ENCODE measurements at regions of chr3 and their contacts with region 1.

Region 1: DNA sequence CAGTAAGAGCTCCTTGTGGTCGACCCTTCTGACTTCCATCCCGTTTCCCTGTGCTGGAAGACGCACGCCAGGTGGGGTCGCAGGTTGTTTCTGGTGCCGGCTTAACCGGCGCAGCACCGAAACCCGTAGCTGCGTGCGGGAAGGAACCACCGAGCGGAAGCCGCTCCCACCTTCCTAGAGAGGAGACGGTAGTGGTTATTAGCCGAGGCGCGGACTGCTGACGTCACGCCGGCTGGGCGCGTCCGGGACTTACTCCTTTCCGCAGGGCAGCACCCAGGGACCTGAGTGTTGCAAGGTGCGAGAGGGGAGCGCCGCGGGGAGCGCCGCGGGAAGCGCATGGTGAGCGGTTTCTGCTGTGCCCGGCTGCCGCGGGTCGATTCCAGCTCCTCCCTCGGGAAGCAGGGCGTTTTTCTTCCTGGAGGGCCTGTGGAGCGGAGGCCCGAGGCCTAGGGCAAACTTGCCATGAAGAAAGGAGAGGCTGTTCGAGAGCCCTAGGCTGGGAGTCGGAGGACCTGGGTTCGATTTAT is at the start of gene ZNF501:
- DNase-seq: peak; percentile 91
- H3K4me3 ChIP-seq: peak within 1 kb of the TSS; percentile 65 to 69
- H3K27ac ChIP-seq: peak within 1 kb of the TSS in 1 of 2 experiments; percentile 64; a peak in 1 of 4 replicates
- H3K4me1 ChIP-seq: no peaks in the 10 kb centered on the region; a peak in 1 of 4 replicates
- H3K27me3 ChIP-seq: no peaks in the 10 kb centered on the region
- CTCF ChIP-seq: no peak
- EP300 ChIP-seq: no peak
- RAD21 ChIP-seq: no peak
- polyA plus RNA-seq, gene ZNF501: 1.1 and 1.5 TPM in 2 replicates

Region 2: DNA sequence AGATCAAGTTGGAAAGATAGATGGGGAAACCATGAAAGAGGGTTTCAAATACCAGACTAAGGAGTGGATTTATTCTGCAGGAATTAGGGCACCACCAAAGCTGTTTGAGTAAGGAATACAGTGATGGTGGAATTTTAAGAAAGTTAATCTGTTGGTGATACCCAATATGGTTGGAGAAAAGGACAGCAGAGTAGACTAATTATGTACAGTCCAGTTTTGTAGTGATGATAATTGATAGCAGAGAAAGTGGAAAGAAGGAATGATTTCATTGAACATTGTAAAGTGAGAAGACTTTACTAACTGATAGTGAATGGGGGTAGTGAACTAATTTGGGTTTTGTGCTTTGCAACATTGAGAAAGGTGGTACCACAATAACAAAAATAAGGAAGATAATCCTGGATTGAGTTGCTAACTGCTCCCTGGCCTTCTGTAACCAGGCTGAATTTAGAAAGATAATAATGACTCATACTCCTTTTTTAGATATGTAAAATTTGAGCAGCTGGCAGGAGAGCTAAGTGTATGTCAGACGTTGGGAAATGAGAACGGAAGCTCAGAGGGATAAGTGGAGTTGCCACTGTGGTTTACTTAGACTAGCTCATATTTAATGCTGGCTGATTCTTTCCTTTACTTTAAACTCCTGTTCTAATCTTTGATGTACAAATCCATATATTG is 373.9 kb before region 1 on chr3:
- CTCF ChIA-PET with region 1: no interaction called
- POLR2A ChIA-PET with region 1: no interaction called
- DNase-seq: no peak
- H3K4me3 ChIP-seq: no peak overlapping the region
- H3K27ac ChIP-seq: peak overlapping the region; percentile 24 to 39; a peak in 3 of 4 replicates
- H3K4me1 ChIP-seq: peaks cover 0 to 5% of the 10 kb centered on the region in 2 experiments; a peak in 2 of 4 replicates
- H3K27me3 ChIP-seq: no peaks in the 10 kb centered on the region
- CTCF ChIP-seq: no peak
- EP300 ChIP-seq: no peak
- RAD21 ChIP-seq: no peak

Region 3: DNA sequence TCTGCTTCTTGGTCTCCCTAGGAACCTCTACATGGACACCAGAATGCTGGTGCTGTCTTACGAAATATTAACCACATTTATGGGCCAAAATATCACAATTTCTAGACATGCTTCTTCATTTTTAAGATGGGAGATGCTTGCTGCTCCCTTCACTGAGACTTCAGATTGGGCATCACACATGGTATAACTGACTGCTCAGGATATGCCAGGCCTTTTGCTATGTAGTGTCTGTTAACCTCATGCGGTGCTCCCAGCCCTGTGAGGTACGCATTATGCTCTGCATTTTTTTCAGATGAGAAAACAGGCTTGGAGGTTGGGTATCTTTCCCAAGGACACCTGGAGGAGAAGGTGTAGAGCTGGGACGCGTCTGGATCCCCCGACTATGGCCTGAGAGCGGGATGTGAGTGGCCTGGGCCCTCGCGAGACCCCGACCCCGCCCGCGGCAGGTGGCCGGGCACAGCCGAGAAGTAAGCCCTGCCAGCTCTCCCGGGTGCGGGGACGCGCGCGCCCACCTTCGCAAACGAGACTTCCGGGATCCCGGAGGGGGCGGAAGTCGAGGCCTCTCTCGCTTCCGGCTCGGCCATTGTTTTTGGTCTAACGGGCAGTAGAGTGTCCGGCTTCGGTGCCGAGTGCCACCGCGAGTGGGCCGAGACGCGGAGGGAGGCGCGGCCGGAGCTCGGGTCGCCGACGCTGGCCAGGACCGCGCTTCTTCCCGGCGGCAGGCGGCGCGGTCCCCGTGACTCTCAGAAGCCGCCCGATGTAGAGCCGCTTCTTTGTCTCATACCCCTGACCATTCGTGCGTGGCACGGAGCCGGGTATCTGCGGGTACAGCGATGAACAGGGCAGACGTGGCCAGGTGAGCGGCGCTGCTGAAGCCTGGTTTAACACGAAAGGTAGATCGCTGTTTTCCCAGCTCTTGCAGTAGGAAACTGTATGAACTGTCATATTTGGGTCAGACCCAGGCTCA is 174.5 kb before region 1 on chr3 and contains the start of gene ZKSCAN7:
- CTCF ChIA-PET with region 1: no interaction called
- POLR2A ChIA-PET with region 1: no interaction called
- DNase-seq: peak; percentile 98
- H3K4me3 ChIP-seq: peak within 1 kb of the TSS; percentile 71 to 95
- H3K27ac ChIP-seq: peak within 1 kb of the TSS; percentile 24 to 86; a peak in 3 of 4 replicates
- H3K4me1 ChIP-seq: peaks cover 0 to 21% of the 10 kb centered on the region in 2 experiments; a peak in 2 of 4 replicates
- H3K27me3 ChIP-seq: no peaks in the 10 kb centered on the region; the same call in 1 of the 2 replicates
- CTCF ChIP-seq: no peak
- EP300 ChIP-seq: no peak
- RAD21 ChIP-seq: no peak
- polyA plus RNA-seq, gene ZKSCAN7: 5.4 and 9.2 TPM in 2 replicates

Region 4: GRCh38 chr3:44712455-44713075 is 16.9 kb before region 1 on chr3 and contains the start of gene ZNF502:
- CTCF ChIA-PET with region 1: interaction called, 23 read pairs
- POLR2A ChIA-PET with region 1: interaction called, 34 read pairs
- DNase-seq: peak; percentile 91
- H3K4me3 ChIP-seq: peak within 1 kb of the TSS; percentile 94 to 95
- H3K27ac ChIP-seq: peak within 1 kb of the TSS; percentile 43 to 81; a peak in 3 of 4 replicates
- H3K4me1 ChIP-seq: peaks cover 0 to 2% of the 10 kb centered on the region in 2 experiments; a peak in 1 of 4 replicates
- H3K27me3 ChIP-seq: no peaks in the 10 kb centered on the region
- CTCF ChIP-seq: peak; percentile 35
- EP300 ChIP-seq: no peak
- RAD21 ChIP-seq: peak; percentile 34
- polyA plus RNA-seq, gene ZNF502: 2.1 and 3.2 TPM in 2 replicates

Region 5: GRCh38 chr3:45037734-45038455 is 308.4 kb after region 1 on chr3:
- CTCF ChIA-PET with region 1: no interaction called
- POLR2A ChIA-PET with region 1: no interaction called
- DNase-seq: peak; percentile 90
- H3K4me3 ChIP-seq: peak overlapping the region in 1 of 2 experiments; percentile 32; a peak in 1 of 4 replicates
- H3K27ac ChIP-seq: no peak overlapping the region
- H3K4me1 ChIP-seq: no peaks in the 10 kb centered on the region; a peak in 1 of 4 replicates
- H3K27me3 ChIP-seq: no peaks in the 10 kb centered on the region
- CTCF ChIP-seq: peak; percentile 98
- EP300 ChIP-seq: no peak
- RAD21 ChIP-seq: peak; percentile 96